ENCODE measurements at regions of chr1 and their contacts with region 1.

Region 1: GRCh38 chr1:197775282-197776262 is at the start of gene DENND1B:
- DNase-seq: peak; percentile 84
- H3K4me3 Mint-ChIP-seq: peak within 1 kb of the TSS; percentile 74
- H3K27ac Mint-ChIP-seq: peak within 1 kb of the TSS; percentile 99
- H3K4me1 Mint-ChIP-seq: peaks cover 64% of the 10 kb centered on the region
- H3K27me3 Mint-ChIP-seq: no peaks in the 10 kb centered on the region
- total RNA-seq, gene DENND1B: 8.9 to 9.7 TPM

Region 2: GRCh38 chr1:197146197-197146889 is 629.2 kb before region 1 on chr1 and contains the start of gene ASPM:
- CTCF ChIA-PET with region 1: no interaction called
- intact Hi-C with region 1: loop called (anchors 5 kb)
- DNase-seq: peak; percentile 98
- H3K4me3 Mint-ChIP-seq: peak within 1 kb of the TSS; percentile 85
- H3K27ac Mint-ChIP-seq: peak within 1 kb of the TSS; percentile 93
- H3K4me1 Mint-ChIP-seq: no peaks in the 10 kb centered on the region
- H3K27me3 Mint-ChIP-seq: peaks cover 19% of the 10 kb centered on the region
- total RNA-seq, gene ASPM: 26.4 to 27.6 TPM

Region 3: DNA sequence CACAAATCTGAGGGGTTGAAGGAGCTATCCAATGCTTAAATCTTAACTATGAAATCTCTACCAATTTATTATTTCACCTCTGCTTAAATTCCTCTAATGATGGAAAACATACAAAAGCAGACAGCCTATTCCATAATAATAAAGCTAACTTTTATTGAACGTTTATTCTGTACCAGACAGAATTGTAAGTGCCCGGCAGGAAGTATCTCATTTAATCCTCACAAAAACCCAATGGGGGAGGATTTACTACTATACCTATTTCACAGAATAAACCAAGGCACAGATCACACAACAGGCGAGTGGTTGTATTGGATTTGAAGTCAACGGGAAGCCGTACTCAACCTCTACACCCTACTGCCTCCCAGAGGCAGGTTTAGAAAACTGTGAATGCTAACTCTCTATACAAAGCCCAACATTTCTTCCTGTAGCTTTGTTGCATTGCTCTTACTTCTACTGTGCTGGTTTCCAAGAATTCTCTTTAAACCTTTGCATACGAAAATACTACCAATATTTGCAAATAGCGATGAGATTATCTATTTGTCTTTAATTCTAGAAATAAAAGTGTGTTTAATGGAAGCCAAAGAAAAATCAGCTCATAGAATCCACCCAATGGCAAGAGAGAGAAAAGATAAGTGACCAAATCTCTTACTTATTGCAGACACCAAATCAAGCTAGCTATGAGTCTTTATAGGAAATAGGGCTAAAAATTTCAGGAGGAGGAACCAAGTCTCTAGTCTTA is 93.3 kb after region 1 on chr1:
- CTCF ChIA-PET with region 1: interaction called, 13 read pairs
- intact Hi-C with region 1: loop called (anchors 1 kb)
- DNase-seq: peak; percentile 56
- H3K4me3 Mint-ChIP-seq: no peak overlapping the region
- H3K27ac Mint-ChIP-seq: no peak overlapping the region
- H3K4me1 Mint-ChIP-seq: no peaks in the 10 kb centered on the region
- H3K27me3 Mint-ChIP-seq: no peaks in the 10 kb centered on the region

Region 4: GRCh38 chr1:198167436-198167934 is 391.9 kb after region 1 on chr1:
- CTCF ChIA-PET with region 1: no interaction called
- intact Hi-C with region 1: loop called (anchors 1 kb)
- DNase-seq: peak; percentile 44
- H3K4me3 Mint-ChIP-seq: peak overlapping the region; percentile 55
- H3K27ac Mint-ChIP-seq: peak overlapping the region; percentile 93
- H3K4me1 Mint-ChIP-seq: peaks cover 90% of the 10 kb centered on the region
- H3K27me3 Mint-ChIP-seq: no peaks in the 10 kb centered on the region

Region 5: GRCh38 chr1:198681831-198682759 is 906.5 kb after region 1 on chr1:
- CTCF ChIA-PET with region 1: no interaction called
- intact Hi-C with region 1: loop called (anchors 10 kb)
- DNase-seq: peak; percentile 86
- H3K4me3 Mint-ChIP-seq: peak overlapping the region; percentile 61
- H3K27ac Mint-ChIP-seq: peak overlapping the region; percentile 99
- H3K4me1 Mint-ChIP-seq: peaks cover 86% of the 10 kb centered on the region
- H3K27me3 Mint-ChIP-seq: no peaks in the 10 kb centered on the region

Region 6: DNA sequence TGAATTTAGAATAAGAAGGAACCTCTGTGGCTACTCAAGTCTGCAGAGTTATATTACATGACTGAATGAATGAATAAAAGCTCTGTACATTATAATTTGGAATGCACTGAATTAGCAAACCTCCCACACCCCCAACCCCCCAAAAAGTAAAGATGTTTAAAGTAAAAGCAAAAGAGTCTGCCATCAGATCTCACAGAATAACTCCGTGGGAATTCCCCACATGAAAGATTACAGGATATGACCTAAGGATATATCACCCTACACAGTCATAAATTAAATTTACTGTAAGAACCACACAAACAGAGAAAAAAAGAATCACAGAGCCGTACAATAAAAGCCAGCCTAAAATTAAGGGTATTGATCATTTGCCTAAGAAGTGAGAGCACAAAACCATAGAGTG is 1450.6 kb after region 1 on chr1:
- CTCF ChIA-PET with region 1: no interaction called
- intact Hi-C with region 1: loop called (anchors 1 kb)
- DNase-seq: peak; percentile 66
- H3K4me3 Mint-ChIP-seq: peak overlapping the region; percentile 46
- H3K27ac Mint-ChIP-seq: peak overlapping the region; percentile 27
- H3K4me1 Mint-ChIP-seq: peaks cover 23% of the 10 kb centered on the region
- H3K27me3 Mint-ChIP-seq: no peaks in the 10 kb centered on the region